Sigmoid colon (tissue), 7 donors: ENCODE measurements at regions of chr10 and their contacts with region 1.

Region 1: GRCh38 chr10:97792141-97792721 is 20.4 kb upstream of the SFRP5 start:
- DNase-seq: peak; percentile 76
- H3K4me3 ChIP-seq: no peak overlapping the region
- H3K27ac ChIP-seq: no peak overlapping the region
- H3K4me1 ChIP-seq: peaks cover 0 to 8% (median 0%) of the 10 kb centered on the region in 4 donors
- H3K27me3 ChIP-seq: peaks cover 0 to 44% (median 18%) of the 10 kb centered on the region in 3 donors
- CTCF ChIP-seq: peak in 3 of 4 experiments; percentile 70 to 88 (median 74)
- EP300 ChIP-seq: no peak
- POLR2A ChIP-seq: no peak

Region 2: DNA sequence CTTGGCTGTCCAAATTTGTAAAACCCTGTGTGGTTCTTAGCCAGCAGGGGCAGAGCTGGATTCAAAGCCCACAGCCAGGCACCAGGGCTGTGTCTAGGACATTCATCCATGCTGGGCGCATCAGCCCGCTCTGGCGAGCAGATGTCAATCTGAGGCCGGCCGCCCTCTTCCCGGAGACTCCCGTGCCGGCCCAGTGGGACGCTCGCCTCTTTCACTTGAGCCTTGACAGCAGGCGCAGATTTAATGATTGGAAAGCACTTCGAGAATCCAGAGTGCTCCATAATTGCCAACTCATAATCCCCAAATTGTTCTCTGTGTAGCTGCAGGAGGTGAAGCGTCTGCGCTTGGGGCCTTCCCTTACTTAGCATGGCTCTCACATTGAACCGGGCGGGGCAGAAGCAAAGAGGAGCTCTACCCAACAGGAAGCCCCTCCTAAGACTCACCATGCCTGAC is 643.1 kb before region 1 on chr10:
- intact Hi-C with region 1: no loop called
- DNase-seq: peak; percentile 50
- H3K4me3 ChIP-seq: no peak overlapping the region
- H3K27ac ChIP-seq: no peak overlapping the region
- H3K4me1 ChIP-seq: no peaks in the 10 kb centered on the region
- H3K27me3 ChIP-seq: no peaks in the 10 kb centered on the region
- CTCF ChIP-seq: no peak
- EP300 ChIP-seq: no peak
- POLR2A ChIP-seq: no peak

Region 3: DNA sequence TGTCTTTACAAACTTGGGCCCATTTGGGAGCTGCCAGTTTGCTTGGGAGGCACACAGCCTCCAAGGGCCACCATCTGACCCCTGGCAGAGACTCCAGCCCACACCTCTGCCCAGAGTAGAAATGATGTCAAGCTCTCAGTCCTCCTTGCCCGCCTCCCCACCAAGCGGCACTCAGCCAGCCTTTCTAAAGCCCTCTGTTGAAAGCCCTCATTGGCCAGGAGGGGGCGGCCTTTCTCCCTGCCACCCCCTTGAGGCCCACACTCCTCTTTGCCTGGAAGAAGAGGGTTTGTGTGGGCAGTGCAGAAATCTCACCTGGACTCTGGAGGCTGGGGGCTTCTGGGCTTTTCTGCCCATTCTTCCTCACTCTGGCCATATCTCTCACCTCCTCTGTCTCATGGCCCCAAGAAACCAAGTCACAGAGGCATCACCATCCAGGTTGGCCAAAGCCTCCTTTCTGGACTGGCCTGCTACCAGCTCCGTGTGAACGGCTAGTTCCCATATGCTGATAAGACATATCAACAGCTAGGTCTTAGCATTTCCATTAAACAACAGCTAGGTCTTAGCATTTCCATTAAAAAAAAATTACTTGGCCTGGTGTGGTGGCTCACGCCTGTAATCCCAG is 257.4 kb before region 1 on chr10:
- intact Hi-C with region 1: no loop called
- DNase-seq: no peak
- H3K4me3 ChIP-seq: no peak overlapping the region
- H3K27ac ChIP-seq: no peak overlapping the region
- H3K4me1 ChIP-seq: peaks cover 0 to 4% (median 0%) of the 10 kb centered on the region in 4 donors
- H3K27me3 ChIP-seq: no peaks in the 10 kb centered on the region
- CTCF ChIP-seq: peak in 1 of 4 experiments; percentile 12
- EP300 ChIP-seq: no peak
- POLR2A ChIP-seq: no peak

Region 4: DNA sequence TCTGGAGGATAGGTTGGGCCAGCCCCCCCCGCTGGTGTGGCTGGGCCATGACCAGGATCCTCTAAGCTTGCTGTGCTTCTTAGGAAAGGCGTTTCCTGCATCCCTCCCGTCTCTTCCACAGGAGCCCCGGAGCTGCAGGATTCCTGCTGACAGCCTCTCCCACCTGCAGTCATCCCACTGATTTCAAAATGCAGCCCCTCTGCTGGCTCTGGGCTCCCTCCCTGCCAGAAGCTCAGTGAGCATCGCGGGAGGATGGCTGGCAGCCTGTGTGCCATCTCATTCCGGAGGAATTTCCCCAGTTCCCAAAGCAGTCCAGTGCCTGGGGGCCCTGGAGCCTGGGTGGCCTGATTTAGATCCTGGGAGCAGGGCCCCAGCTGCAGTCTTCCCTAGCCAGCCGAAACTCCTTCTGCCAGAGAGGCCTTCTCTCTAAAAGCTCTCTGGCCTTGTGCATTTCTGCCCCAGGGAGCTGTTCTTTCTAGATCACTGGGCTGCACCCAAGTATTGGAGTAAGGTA is 35.6 kb after region 1 on chr10:
- intact Hi-C with region 1: no loop called
- DNase-seq: no peak
- H3K4me3 ChIP-seq: no peak overlapping the region
- H3K27ac ChIP-seq: no peak overlapping the region
- H3K4me1 ChIP-seq: no peaks in the 10 kb centered on the region
- H3K27me3 ChIP-seq: peaks cover 0 to 43% (median 0%) of the 10 kb centered on the region in 3 donors
- CTCF ChIP-seq: no peak
- EP300 ChIP-seq: no peak
- POLR2A ChIP-seq: no peak

Region 5: DNA sequence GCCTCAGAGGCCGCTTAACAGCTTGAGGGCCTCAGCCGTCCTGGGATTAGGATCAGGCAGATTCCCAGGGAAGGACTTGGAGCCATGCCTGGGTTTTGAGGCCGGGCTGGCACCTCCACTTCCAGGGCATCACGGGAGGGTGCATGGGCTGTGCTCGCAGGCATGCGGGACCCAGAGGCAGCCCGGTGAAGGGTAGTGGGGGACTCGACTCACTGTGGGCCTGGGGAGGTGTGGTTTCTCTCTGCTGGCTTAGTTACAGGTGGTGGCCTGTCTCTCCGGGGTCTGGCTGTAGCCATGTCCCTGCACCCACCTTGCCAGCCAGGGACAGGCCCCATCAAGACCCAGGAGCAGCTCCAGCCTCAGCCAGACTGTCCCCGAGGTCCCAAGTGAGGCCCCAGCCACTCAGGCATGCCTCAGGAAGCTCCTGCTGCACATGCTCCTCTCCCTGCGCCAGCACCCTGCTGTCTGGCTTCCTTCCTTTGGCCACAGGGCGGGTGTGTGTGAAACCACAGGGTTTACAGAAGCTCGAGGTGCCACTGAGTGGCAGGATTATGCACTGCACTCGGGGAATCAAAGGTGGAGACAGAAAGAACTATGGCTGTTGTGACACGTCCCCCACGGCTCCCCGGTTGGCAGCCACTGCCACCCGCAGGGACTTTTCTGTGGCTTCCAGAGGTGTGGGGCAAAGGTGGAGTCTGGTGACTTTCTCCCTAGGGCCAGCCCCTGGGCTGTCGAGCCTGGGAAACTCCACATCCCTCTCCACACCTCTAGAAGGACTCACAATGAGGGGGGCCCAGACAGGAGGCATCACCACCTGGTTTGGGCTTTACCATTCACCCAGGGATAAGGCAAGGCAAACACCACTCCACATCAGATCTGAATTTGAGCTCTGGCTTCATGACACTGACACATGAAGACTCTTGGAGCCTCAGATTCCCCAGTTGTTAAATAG is 77.1 kb after region 1 on chr10:
- intact Hi-C with region 1: loop called (anchors 1 kb)
- DNase-seq: peak; percentile 85
- H3K4me3 ChIP-seq: no peak overlapping the region
- H3K27ac ChIP-seq: no peak overlapping the region
- H3K4me1 ChIP-seq: peaks cover 0 to 10% (median 7%) of the 10 kb centered on the region in 4 donors
- H3K27me3 ChIP-seq: peaks cover 3 to 35% (median 5%) of the 10 kb centered on the region in 3 donors
- CTCF ChIP-seq: peak; percentile 60 to 83 (median 70)
- EP300 ChIP-seq: no peak
- POLR2A ChIP-seq: no peak

Region 6: GRCh38 chr10:97914837-97915211 is 122.6 kb after region 1 on chr10:
- intact Hi-C with region 1: no loop called
- DNase-seq: peak; percentile 79
- H3K4me3 ChIP-seq: no peak overlapping the region
- H3K27ac ChIP-seq: no peak overlapping the region
- H3K4me1 ChIP-seq: peaks cover 0 to 9% (median 7%) of the 10 kb centered on the region in 4 donors
- H3K27me3 ChIP-seq: peaks cover 0 to 14% (median 4%) of the 10 kb centered on the region in 3 donors
- CTCF ChIP-seq: peak; percentile 54 to 90 (median 74)
- EP300 ChIP-seq: no peak
- POLR2A ChIP-seq: no peak

Region 7: DNA sequence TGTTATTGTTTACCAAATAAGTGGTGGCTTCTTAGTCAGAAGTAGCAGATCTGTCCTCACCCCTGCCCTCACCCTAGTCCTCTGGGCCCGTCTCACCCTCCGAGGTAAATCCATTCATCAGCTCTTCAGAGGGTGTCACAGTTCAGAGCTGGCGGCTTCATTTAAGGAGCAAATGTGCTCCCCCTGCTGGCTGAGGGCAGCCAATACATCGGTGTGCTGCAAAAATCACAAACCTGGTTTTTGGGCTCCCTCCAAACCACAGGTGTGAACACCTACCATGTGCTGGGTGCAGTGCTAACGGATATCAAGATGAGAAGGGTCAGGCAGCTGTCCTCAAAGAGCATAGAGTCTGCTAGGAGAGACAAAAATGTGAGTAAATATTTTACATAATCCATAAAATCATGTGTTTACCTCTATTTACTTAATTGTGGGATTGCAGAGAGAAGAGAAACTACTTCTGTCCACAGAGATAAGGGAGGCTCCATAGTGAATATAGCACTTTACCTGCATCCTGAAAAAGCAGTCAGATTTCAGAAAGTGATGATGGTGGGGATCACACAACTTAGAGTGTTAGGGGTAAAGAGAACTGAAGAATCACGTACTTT is 253.7 kb after region 1 on chr10:
- intact Hi-C with region 1: loop called (anchors 10 kb)
- DNase-seq: peak; percentile 63
- H3K4me3 ChIP-seq: no peak overlapping the region
- H3K27ac ChIP-seq: no peak overlapping the region
- H3K4me1 ChIP-seq: no peaks in the 10 kb centered on the region
- H3K27me3 ChIP-seq: peaks cover 0 to 15% (median 1%) of the 10 kb centered on the region in 3 donors
- CTCF ChIP-seq: peak; percentile 5 to 84 (median 70)
- EP300 ChIP-seq: no peak
- POLR2A ChIP-seq: no peak